ENCODE measurements at regions of chr16 and their contacts with region 1.

Region 1: GRCh38 chr16:64384636-64385035 is 737.2 kb downstream of the CDH11 start:
- DNase-seq: no peak
- ATAC-seq: no peak
- H3K4me3 ChIP-seq: no peak overlapping the region
- H3K27ac ChIP-seq: no peak overlapping the region
- H3K4me1 ChIP-seq: no peaks in the 10 kb centered on the region
- H3K27me3 ChIP-seq: no peaks in the 10 kb centered on the region
- CTCF ChIP-seq: no peak
- EP300 ChIP-seq: no peak
- POLR2A ChIP-seq: no peak
- RAD21 ChIP-seq: no peak

Region 2: GRCh38 chr16:64356267-64356666 is 28.4 kb before region 1 on chr16:
- CTCF ChIA-PET with region 1: no interaction called
- POLR2A ChIA-PET with region 1: no interaction called
- RAD21 ChIA-PET with region 1: no interaction called
- SMC1A ChIA-PET with region 1: no interaction called
- in situ Hi-C with region 1: no loop called
- intact Hi-C with region 1: loop called (anchors 1 kb)
- DNase-seq: no peak
- ATAC-seq: no peak
- H3K4me3 ChIP-seq: no peak overlapping the region
- H3K27ac ChIP-seq: no peak overlapping the region
- H3K4me1 ChIP-seq: no peaks in the 10 kb centered on the region
- H3K27me3 ChIP-seq: no peaks in the 10 kb centered on the region
- CTCF ChIP-seq: no peak
- EP300 ChIP-seq: no peak
- POLR2A ChIP-seq: no peak
- RAD21 ChIP-seq: no peak

Region 3: GRCh38 chr16:64416216-64417005 is 31.8 kb after region 1 on chr16:
- CTCF ChIA-PET with region 1: no interaction called
- POLR2A ChIA-PET with region 1: no interaction called
- RAD21 ChIA-PET with region 1: no interaction called
- SMC1A ChIA-PET with region 1: no interaction called
- in situ Hi-C with region 1: no loop called
- intact Hi-C with region 1: no loop called
- DNase-seq: no peak
- ATAC-seq: peak; percentile 77
- H3K4me3 ChIP-seq: no peak overlapping the region
- H3K27ac ChIP-seq: no peak overlapping the region
- H3K4me1 ChIP-seq: no peaks in the 10 kb centered on the region
- H3K27me3 ChIP-seq: no peaks in the 10 kb centered on the region
- CTCF ChIP-seq: no peak
- EP300 ChIP-seq: no peak
- POLR2A ChIP-seq: no peak
- RAD21 ChIP-seq: no peak

Region 4: GRCh38 chr16:64667334-64667877 is 282.8 kb after region 1 on chr16:
- CTCF ChIA-PET with region 1: no interaction called
- POLR2A ChIA-PET with region 1: no interaction called
- RAD21 ChIA-PET with region 1: no interaction called
- SMC1A ChIA-PET with region 1: no interaction called
- in situ Hi-C with region 1: no loop called
- intact Hi-C with region 1: no loop called
- DNase-seq: no peak
- ATAC-seq: no peak
- H3K4me3 ChIP-seq: no peak overlapping the region
- H3K27ac ChIP-seq: no peak overlapping the region
- H3K4me1 ChIP-seq: no peaks in the 10 kb centered on the region
- H3K27me3 ChIP-seq: no peaks in the 10 kb centered on the region
- CTCF ChIP-seq: no peak
- EP300 ChIP-seq: no peak
- POLR2A ChIP-seq: no peak
- RAD21 ChIP-seq: no peak